ENCODE measurements at regions of chr12 and their contacts with region 1.

Region 1: GRCh38 chr12:105053116-105053572 is 31.1 kb downstream of the ALDH1L2 start:
- DNase-seq: peak; percentile 67
- ATAC-seq: peak; percentile 84
- H3K4me3 ChIP-seq: no peak overlapping the region
- H3K27ac ChIP-seq: no peak overlapping the region
- H3K4me1 ChIP-seq: no peaks in the 10 kb centered on the region
- H3K27me3 ChIP-seq: no peaks in the 10 kb centered on the region
- CTCF ChIP-seq: peak; percentile 85 to 97 (median 86)
- POLR2A ChIP-seq: no peak
- RAD21 ChIP-seq: peak; percentile 97

Region 2: GRCh38 chr12:104680066-104680465 is 373.1 kb before region 1 on chr12:
- CTCF ChIA-PET with region 1: no interaction called
- POLR2A ChIA-PET with region 1: no interaction called
- RAD21 ChIA-PET with region 1: no interaction called
- intact Hi-C with region 1: loop called (anchors 2 kb)
- DNase-seq: peak; percentile 13
- ATAC-seq: peak; percentile 76; the same call in 1 of the 2 replicates
- H3K4me3 ChIP-seq: no peak overlapping the region
- H3K27ac ChIP-seq: no peak overlapping the region
- H3K4me1 ChIP-seq: peaks cover 17 to 23% of the 10 kb centered on the region in 2 experiments
- H3K27me3 ChIP-seq: no peaks in the 10 kb centered on the region
- CTCF ChIP-seq: peak; percentile 23 to 57 (median 37); a peak in 4 of 6 replicates
- POLR2A ChIP-seq: no peak
- RAD21 ChIP-seq: peak; percentile 71

Region 3: GRCh38 chr12:104733717-104734175 is 319.4 kb before region 1 on chr12:
- CTCF ChIA-PET with region 1: no interaction called
- POLR2A ChIA-PET with region 1: no interaction called
- RAD21 ChIA-PET with region 1: no interaction called
- intact Hi-C with region 1: loop called (anchors 2 kb)
- DNase-seq: peak; percentile 8
- ATAC-seq: peak; percentile 79
- H3K4me3 ChIP-seq: no peak overlapping the region
- H3K27ac ChIP-seq: no peak overlapping the region
- H3K4me1 ChIP-seq: no peaks in the 10 kb centered on the region; a peak in 1 of 4 replicates
- H3K27me3 ChIP-seq: no peaks in the 10 kb centered on the region
- CTCF ChIP-seq: peak; percentile 8 to 46 (median 42); a peak in 4 of 6 replicates
- POLR2A ChIP-seq: no peak
- RAD21 ChIP-seq: peak; percentile 74

Region 4: DNA sequence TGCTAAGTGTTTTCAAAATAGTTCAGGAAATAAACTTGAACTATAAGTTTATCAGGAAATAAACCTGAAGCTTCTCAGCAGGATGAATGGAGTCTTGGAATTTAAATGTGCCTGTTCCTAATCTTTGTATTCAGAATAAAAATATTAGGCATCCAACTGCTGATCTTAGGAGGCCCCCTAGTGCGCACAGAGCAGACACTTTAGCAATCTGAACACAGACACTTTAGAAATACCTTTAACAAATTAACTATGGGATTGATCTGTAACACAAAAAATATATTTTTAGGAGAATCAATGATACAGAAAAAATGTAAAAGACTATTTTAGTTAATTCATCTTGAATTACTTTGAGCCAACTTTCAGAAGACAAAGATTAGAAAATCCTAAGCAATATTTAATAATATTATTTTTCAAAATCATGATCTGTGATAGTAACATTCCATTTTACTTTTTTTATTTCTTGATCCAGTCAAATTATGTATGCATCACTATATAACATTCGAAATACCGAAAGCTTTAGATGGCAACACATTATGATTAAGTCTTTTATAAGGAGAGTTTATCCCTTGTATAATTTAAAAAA is 175.9 kb before region 1 on chr12:
- CTCF ChIA-PET with region 1: no interaction called
- POLR2A ChIA-PET with region 1: no interaction called
- RAD21 ChIA-PET with region 1: no interaction called
- intact Hi-C with region 1: loop called (anchors 5 kb)
- DNase-seq: no peak
- ATAC-seq: peak; percentile 75
- H3K4me3 ChIP-seq: no peak overlapping the region
- H3K27ac ChIP-seq: no peak overlapping the region
- H3K4me1 ChIP-seq: no peaks in the 10 kb centered on the region
- H3K27me3 ChIP-seq: no peaks in the 10 kb centered on the region
- CTCF ChIP-seq: peak; percentile 51 to 79 (median 65)
- POLR2A ChIP-seq: no peak
- RAD21 ChIP-seq: peak; percentile 92

Measured in HCT116 (cell line).